Esophagus muscularis mucosa (tissue), 4 donors: ENCODE measurements at regions of chr3 and their contacts with region 1.

Region 1: DNA sequence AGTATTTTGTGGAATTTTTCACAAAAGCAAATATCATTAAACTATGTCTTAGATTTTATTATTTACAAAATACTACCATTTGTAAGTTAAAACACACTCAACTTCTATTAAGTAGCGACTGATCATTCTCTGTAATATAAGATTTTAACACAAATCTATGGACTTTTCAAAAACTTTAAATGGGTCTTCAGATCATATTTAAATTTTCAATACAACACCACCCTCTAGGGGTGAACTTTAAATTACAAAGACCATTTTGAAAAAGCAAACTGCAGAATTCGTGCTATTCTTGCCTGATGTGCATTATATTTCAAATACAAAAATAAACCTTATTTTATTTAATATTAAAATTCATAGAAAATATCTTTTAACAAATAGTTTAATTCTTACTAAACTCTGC is 8.2 kb upstream of the VGLL4 start:
- DNase-seq: no peak
- H3K4me3 ChIP-seq: no peak overlapping the region
- H3K27ac ChIP-seq: no peak overlapping the region
- H3K4me1 ChIP-seq: peaks cover 0 to 24% (median 13%) of the 10 kb centered on the region in 4 donors
- H3K27me3 ChIP-seq: no peaks in the 10 kb centered on the region
- CTCF ChIP-seq: peak; percentile 59 to 63 (median 62)
- EP300 ChIP-seq: no peak
- POLR2A ChIP-seq: no peak

Region 2: DNA sequence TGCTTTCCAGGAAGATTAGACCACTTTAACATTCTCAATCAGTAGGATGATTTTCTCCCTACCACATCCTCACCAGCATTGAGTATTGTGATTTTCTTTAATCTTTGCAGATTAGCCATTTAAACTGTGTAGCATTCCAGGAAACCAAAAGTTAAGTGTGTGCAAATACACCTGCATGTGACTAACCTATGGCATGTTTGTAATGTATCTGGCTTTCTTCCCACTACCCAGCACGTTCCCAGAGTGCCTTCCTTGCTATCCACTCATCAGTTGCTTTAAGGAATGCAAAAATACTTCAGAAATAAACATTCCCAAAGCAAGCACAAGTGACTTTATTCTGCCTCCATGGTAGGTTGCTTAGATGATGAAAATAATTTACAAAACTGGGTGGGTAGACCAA is 305.5 kb before region 1 on chr3:
- intact Hi-C with region 1: no loop called
- DNase-seq: no peak
- H3K4me3 ChIP-seq: no peak overlapping the region
- H3K27ac ChIP-seq: no peak overlapping the region
- H3K4me1 ChIP-seq: no peaks in the 10 kb centered on the region
- H3K27me3 ChIP-seq: no peaks in the 10 kb centered on the region
- CTCF ChIP-seq: no peak
- EP300 ChIP-seq: no peak
- POLR2A ChIP-seq: no peak

Region 3: GRCh38 chr3:11671648-11672100 is 19.8 kb after region 1 on chr3:
- intact Hi-C with region 1: no loop called
- DNase-seq: peak; percentile 74
- H3K4me3 ChIP-seq: no peak overlapping the region
- H3K27ac ChIP-seq: no peak overlapping the region
- H3K4me1 ChIP-seq: peaks cover 20 to 45% (median 39%) of the 10 kb centered on the region in 4 donors
- H3K27me3 ChIP-seq: no peaks in the 10 kb centered on the region
- CTCF ChIP-seq: no peak
- EP300 ChIP-seq: no peak
- POLR2A ChIP-seq: no peak

Region 4: GRCh38 chr3:11808231-11808630 is 156.3 kb after region 1 on chr3:
- intact Hi-C with region 1: loop called (anchors 5 kb)
- DNase-seq: no peak
- H3K4me3 ChIP-seq: no peak overlapping the region
- H3K27ac ChIP-seq: peak overlapping the region in 3 of 4 donors; percentile 21 to 44 (median 24)
- H3K4me1 ChIP-seq: peaks cover 0 to 31% (median 24%) of the 10 kb centered on the region in 4 donors
- H3K27me3 ChIP-seq: no peaks in the 10 kb centered on the region
- CTCF ChIP-seq: no peak
- EP300 ChIP-seq: no peak
- POLR2A ChIP-seq: no peak